ENCODE measurements at regions of chr2 and their contacts with region 1.

Region 1: DNA sequence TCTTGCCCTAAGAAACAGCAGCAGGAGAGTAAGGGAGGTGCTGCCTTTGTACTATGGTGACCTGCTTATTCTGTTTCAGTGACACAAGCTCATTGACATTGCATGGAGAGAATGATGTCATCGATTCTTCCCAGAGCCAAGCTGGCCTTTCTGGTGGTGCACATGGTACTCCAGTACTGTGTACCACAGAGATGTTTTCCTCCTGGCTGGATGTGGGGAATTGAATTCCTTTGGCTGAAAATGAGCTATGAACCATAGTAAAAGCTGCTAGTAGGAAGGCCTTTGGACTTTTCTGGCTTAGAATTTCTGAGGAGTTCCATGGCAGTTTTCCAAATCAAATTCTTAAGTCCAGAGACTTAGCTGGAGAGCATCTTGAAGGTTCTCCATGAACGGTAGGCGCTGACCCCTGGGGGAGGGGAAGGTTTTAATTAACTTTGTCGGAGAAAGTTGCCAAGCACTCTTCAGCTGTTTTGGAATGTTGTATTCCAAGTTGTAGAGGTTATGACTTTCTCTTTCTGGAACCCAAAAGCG is 17.1 kb upstream of the B3GNT2 start:
- DNase-seq: peak in 2 of 5 donors; percentile 34 to 62
- ATAC-seq: peak; percentile 78 to 91 (median 87)
- H3K4me3 ChIP-seq: no peak overlapping the region
- H3K27ac ChIP-seq: peak overlapping the region in 10 of 12 donors; percentile 20 to 78 (median 58)
- H3K4me1 ChIP-seq: peaks cover 0 to 43% (median 17%) of the 10 kb centered on the region in 12 donors
- H3K27me3 ChIP-seq: no peaks in the 10 kb centered on the region
- CTCF ChIP-seq: no peak
- POLR2A ChIP-seq: no peak

Region 2: DNA sequence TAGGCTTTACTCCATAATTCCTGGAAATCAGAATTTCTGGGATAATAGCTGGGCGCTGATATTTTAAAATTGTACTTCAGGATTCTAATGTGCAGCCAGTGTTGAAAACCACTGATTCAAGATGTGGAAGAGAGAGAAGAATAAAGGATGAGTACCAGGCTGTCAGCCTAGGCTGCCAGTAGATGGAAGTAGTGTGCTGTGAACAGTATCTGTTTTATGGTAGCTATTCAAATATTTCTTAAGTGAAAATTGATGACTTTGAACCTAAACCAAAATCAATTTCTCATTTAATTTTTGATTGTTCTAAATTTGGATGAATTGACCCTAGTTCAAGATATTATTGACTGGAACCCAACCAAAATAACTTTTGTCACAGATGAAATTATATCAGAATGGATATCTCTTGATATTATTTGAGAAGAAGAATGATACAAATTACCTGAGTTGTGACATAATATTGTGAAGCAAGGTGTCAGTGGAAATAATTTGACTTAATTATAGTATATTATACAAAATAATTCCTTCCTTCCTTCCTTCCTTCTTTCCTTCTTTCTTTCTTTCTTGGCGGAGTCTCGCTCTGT is 185.3 kb before region 1 on chr2:
- intact Hi-C with region 1: loop called in 1 of 10 experiments (anchors 5 kb)
- DNase-seq: peak in 1 of 5 donors; percentile 19
- ATAC-seq: peak in 3 of 4 donors; percentile 67 to 83 (median 75)
- H3K4me3 ChIP-seq: no peak overlapping the region
- H3K27ac ChIP-seq: no peak overlapping the region
- H3K4me1 ChIP-seq: peaks cover 0 to 25% (median 3%) of the 10 kb centered on the region in 12 donors
- H3K27me3 ChIP-seq: no peaks in the 10 kb centered on the region
- CTCF ChIP-seq: peak; percentile 55 to 86 (median 69)
- POLR2A ChIP-seq: no peak

Region 3: DNA sequence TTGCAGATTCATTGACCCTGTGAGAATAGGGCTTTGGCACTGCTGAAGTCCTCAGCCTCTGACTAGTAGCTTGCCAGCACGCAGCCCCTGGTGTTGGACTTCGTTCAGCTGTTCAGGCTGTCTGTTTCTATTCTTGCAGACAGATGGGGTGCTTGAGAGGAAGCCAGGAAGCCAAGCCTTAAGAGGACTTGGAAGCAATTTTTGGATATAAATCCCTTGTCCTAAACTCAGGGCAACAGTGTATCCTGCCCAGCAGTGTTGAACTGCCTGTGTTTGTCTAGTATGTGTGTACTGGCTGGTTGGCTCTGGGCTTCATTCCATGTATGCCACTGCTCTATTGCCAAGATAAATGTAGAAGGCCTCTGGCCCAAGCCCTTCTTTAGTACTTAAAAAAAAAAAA is 164.7 kb before region 1 on chr2:
- intact Hi-C with region 1: loop called in 2 of 10 experiments (anchors 5 to 10 kb)
- DNase-seq: peak; percentile 74 to 88 (median 79)
- ATAC-seq: peak; percentile 98 to 99 (median 98)
- H3K4me3 ChIP-seq: no peak overlapping the region
- H3K27ac ChIP-seq: peak overlapping the region in 9 of 12 donors; percentile 24 to 74 (median 52)
- H3K4me1 ChIP-seq: peaks cover 0 to 28% (median 19%) of the 10 kb centered on the region in 12 donors
- H3K27me3 ChIP-seq: no peaks in the 10 kb centered on the region
- CTCF ChIP-seq: peak in 11 of 12 donors; percentile 10 to 68 (median 40)
- POLR2A ChIP-seq: no peak

Region 4: DNA sequence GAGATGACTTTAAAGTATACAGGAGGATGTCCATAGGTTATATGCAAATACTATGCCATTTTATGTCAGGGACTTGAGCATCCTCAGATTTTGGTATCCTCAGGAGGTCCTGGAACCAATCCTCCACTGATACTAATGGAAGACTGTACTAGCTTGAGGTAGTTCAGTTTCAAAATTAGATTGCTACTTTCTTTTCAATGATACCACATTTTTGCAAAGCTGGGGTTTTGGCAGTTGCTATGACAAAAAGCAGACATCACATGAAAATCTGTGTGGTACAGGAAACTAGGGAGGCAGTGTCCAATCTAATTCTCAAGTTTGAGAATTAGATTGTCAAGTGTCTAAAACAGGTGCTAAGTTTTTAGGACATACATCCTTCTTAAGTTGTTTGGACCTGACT is 541.0 kb after region 1 on chr2:
- intact Hi-C with region 1: loop called in 1 of 10 experiments (anchors 5 kb)
- DNase-seq: no peak
- ATAC-seq: no peak
- H3K4me3 ChIP-seq: no peak overlapping the region
- H3K27ac ChIP-seq: no peak overlapping the region
- H3K4me1 ChIP-seq: peaks cover 0 to 4% (median 0%) of the 10 kb centered on the region in 12 donors
- H3K27me3 ChIP-seq: no peaks in the 10 kb centered on the region
- CTCF ChIP-seq: no peak
- POLR2A ChIP-seq: no peak

Measured in heart left ventricle (tissue), 16 donors.